Caco-2 (cell line): ENCODE measurements at regions of chr10 and their contacts with region 1.

Region 1: DNA sequence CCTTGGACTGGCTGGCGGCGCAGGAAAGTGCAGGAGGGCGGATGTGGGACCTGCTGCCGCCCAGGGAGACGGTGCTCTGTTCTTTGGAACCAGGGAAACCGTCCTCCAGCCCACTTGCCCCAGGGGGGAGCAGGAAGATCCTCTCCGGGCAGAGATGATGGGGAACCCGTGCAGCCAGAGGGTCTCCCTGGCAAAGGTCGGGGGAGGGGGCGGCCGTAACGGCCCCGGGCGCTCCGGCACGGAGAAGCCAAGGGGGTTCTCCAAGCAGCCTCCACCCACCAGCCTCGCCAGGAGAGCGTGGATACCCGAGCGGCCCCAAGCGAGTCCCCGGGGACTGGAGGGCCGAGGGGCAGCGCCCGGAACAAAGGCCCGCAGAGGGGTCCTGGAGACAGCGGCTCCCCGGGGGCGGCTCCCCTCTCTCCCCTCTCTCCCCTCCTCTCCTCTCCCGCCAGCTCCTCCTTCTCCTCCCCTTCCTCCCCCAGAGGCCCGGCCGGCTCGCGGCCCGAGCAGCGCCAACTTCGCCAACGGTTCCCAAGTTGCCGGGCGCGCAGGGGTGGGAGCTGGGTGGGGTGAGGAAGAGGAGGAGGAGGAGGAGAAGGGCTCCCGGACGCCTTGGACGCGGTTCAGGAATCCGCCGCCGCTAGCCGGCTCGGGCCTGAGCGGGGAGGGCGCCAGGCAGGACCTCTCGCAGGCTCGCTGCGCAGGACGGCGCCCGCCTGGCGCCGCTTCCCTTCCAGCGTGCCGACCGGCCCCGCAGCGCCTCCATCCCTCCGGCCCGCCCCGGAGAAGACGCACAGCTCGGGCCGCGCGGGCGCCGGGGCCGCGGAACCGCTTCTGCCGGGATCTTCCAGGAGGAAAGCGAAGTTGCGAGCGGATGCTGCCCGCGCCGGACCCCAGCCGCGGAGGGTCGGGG is at the start of gene CHST3:
- DNase-seq: peak; percentile 58 to 68
- H3K4me3 ChIP-seq: peak within 1 kb of the TSS; percentile 84
- H3K4me3 Mint-ChIP-seq: peak within 1 kb of the TSS; percentile 99
- H3K27ac Mint-ChIP-seq: peak within 1 kb of the TSS; percentile 96
- H3K4me1 ChIP-seq: peaks cover 67% of the 10 kb centered on the region
- H3K4me1 Mint-ChIP-seq: peaks cover 57% of the 10 kb centered on the region
- H3K27me3 ChIP-seq: no peaks in the 10 kb centered on the region
- H3K27me3 Mint-ChIP-seq: no peaks in the 10 kb centered on the region
- CTCF ChIP-seq: no peak
- total RNA-seq, gene CHST3: 40.9 and 46.0 TPM in 2 replicates

Region 2: GRCh38 chr10:71927776-71928592 is 36.0 kb before region 1 on chr10:
- CTCF ChIA-PET with region 1: no interaction called
- POLR2A ChIA-PET with region 1: interaction called, 3 read pairs
- intact Hi-C with region 1: loop called (anchors 1 kb)
- DNase-seq: peak; percentile 74 to 77
- H3K4me3 ChIP-seq: no peak overlapping the region
- H3K4me3 Mint-ChIP-seq: peak overlapping the region; percentile 19
- H3K27ac Mint-ChIP-seq: peak overlapping the region; percentile 60
- H3K4me1 ChIP-seq: peaks cover 25% of the 10 kb centered on the region
- H3K4me1 Mint-ChIP-seq: peaks cover 25% of the 10 kb centered on the region
- H3K27me3 ChIP-seq: no peaks in the 10 kb centered on the region
- H3K27me3 Mint-ChIP-seq: no peaks in the 10 kb centered on the region
- CTCF ChIP-seq: no peak

Region 3: GRCh38 chr10:72574636-72575035 is 610.6 kb after region 1 on chr10:
- CTCF ChIA-PET with region 1: no interaction called
- POLR2A ChIA-PET with region 1: no interaction called
- intact Hi-C with region 1: no loop called
- DNase-seq: no peak
- H3K4me3 ChIP-seq: no peak overlapping the region
- H3K4me3 Mint-ChIP-seq: no peak overlapping the region
- H3K27ac Mint-ChIP-seq: no peak overlapping the region
- H3K4me1 ChIP-seq: no peaks in the 10 kb centered on the region
- H3K4me1 Mint-ChIP-seq: no peaks in the 10 kb centered on the region
- H3K27me3 ChIP-seq: no peaks in the 10 kb centered on the region
- H3K27me3 Mint-ChIP-seq: no peaks in the 10 kb centered on the region
- CTCF ChIP-seq: no peak